ENCODE measurements at regions of chr11 and their contacts with region 1.

Region 1: DNA sequence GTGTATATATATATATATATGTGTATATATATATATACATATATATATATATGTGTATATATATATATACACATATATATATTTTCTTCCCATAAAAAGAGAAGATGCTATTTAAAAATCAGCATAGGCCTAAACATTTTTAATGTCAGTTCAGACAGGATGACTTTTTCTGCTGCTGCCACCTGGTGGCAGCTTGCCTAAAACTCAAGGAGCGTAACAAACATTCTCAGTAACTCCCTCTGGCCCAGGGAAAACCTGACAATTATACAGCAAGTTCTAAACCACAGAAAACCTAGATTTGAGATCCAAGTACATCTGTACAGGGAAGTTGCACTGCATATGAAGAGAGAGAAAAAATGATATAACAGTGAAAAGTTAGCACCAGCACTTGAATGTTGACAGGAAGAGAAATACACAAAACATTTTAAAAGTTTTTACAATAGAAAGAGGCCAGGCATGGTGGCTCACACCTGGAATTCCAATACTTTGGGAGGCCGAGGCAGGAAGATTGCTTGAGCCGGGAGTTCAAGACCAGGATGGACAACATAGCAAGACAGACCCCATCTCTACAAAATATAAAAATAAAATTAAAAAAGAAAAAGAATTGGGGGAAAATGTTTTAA is 16.6 kb downstream of the OR8A1 start:
- DNase-seq: peak; percentile 72
- ATAC-seq: no peak

Region 2: DNA sequence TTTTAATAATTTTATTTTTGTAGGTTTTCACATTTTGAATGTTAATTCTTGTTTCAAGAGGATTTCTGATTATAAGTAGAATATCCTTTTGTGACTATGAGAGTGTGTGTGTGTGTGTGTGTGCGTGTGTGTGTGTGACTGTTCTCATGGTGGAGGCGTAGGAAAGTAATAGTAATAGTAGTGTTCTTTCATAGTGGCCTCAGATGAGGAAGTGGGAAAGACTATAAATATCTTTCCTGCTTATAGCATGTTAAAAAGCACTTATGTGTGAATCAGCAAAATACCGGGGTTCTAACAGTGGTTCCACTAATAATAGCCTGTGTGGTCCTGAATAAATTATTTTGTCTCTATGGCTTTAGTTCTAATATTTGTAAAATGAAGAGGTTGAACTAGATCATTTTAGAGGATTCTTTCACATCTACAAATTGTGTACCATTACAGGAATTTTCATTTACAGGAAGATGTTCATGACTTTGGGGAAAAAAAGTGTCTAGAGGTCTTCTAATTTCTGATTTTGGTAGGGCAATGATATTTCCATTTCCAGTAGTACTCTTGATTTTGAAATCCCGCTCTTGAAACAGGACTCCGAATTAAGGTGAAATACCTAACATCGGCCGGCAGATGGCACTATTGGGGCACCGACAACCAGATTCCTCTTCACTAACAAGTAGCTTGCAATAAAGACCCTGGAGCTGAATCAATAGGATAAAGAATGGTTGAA is 515.3 kb before region 1 on chr11:
- intact Hi-C with region 1: loop called (anchors 10 kb)
- DNase-seq: peak; percentile 47
- ATAC-seq: peak; percentile 62

Region 3: GRCh38 chr11:124409906-124410305 is 176.4 kb before region 1 on chr11:
- intact Hi-C with region 1: loop called (anchors 5 kb)
- DNase-seq: no peak
- ATAC-seq: no peak

Measured in Right ventricle myocardium superior (tissue), 1 donor.